IMR-90 (cell line): ENCODE measurements at regions of chr12 and their contacts with region 1.

Region 1: GRCh38 chr12:95810411-95810810 is 19.8 kb upstream of the NTN4 start:
- DNase-seq: no peak
- ATAC-seq: no peak
- H3K4me3 ChIP-seq: no peak overlapping the region
- H3K27ac ChIP-seq: no peak overlapping the region
- H3K4me1 ChIP-seq: peaks cover 5% of the 10 kb centered on the region
- H3K27me3 ChIP-seq: no peaks in the 10 kb centered on the region
- CTCF ChIP-seq: no peak
- POLR2A ChIP-seq: no peak
- RAD21 ChIP-seq: no peak

Region 2: GRCh38 chr12:95848575-95849388 is 38.4 kb after region 1 on chr12:
- CTCF ChIA-PET with region 1: no interaction called
- POLR2A ChIA-PET with region 1: interaction called, 12 read pairs
- dilution Hi-C with region 1: no loop called
- in situ Hi-C with region 1: no loop called
- intact Hi-C with region 1: no loop called
- DNase-seq: peak; percentile 48
- ATAC-seq: peak; percentile 89
- H3K4me3 ChIP-seq: no peak overlapping the region
- H3K27ac ChIP-seq: no peak overlapping the region
- H3K4me1 ChIP-seq: no peaks in the 10 kb centered on the region
- H3K27me3 ChIP-seq: peaks cover 9% of the 10 kb centered on the region
- CTCF ChIP-seq: peak; percentile 50
- POLR2A ChIP-seq: no peak
- RAD21 ChIP-seq: peak; percentile 64

Region 3: DNA sequence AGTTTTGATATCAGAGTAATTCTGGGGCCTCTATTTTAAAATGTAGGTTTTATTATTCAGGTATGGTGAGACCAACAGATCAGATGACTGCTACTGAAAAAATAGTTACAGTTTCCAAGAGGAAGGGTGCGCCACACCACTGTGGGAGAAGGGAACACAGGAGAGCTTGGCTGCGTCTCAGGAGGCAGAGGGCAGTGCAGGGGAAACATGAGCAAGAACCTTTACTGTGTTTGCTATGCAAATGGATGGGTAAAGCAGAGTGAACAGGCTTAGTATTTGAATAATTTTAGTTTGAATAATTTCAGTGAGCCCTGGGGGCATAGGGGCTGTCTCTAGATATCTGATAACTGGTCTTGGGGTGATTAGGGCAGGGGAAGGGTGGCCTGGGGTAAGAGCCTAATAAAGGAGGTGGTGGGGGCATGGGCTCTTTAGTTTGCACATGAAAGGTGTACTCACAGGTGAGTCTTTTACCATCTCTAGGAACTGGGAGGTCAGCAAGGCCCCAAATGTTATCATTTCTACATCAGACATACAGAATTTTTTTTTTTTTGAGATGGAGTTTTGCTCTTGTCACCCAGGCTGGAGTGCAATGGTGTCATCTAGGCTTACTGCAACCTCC is 899.8 kb after region 1 on chr12:
- CTCF ChIA-PET with region 1: no interaction called
- POLR2A ChIA-PET with region 1: no interaction called
- dilution Hi-C with region 1: no loop called
- in situ Hi-C with region 1: no loop called
- intact Hi-C with region 1: no loop called
- DNase-seq: no peak
- ATAC-seq: no peak
- H3K4me3 ChIP-seq: no peak overlapping the region
- H3K27ac ChIP-seq: no peak overlapping the region
- H3K4me1 ChIP-seq: no peaks in the 10 kb centered on the region
- H3K27me3 ChIP-seq: no peaks in the 10 kb centered on the region
- CTCF ChIP-seq: no peak
- POLR2A ChIP-seq: no peak
- RAD21 ChIP-seq: no peak